ENCODE measurements at regions of chr15 and their contacts with region 1.

Region 1: DNA sequence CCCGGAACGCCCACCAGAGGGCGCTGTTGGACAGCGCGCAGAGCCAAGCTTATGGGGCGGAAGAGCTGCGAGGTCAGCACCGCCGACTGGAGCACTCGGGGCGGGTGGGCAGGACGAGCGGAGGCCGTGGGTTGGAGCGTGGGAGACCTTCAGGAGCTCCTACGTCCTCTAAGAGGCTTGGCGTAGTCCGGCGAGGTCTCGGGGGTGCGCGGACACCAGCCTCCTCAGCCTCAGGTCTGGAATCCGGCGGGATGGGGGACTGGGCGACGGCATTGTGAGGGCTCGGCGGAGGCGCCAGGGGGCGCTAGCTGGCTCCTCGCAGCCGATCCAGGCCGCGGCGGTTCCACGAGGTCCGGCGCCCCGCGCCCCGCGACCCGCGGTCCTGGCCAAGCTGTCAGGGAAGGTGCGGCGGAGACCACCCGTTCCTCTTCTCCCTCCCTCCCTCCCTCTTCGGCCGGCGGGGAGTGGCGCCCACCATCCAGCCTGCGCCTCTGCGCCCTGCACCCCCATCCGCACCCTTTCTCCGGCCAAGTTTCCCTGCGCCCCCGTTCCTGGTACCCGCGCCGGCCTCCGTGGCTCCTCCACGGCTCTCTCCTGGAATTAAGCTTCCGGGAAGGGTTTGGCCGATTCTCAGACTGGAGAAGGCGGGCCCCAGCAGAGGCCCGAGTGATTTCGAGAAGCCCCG is 24.3 kb upstream of the POLG start:
- DNase-seq: peak; percentile 72
- H3K4me3 Mint-ChIP-seq: peak overlapping the region; percentile 78
- H3K27ac Mint-ChIP-seq: no peak overlapping the region
- H3K4me1 Mint-ChIP-seq: no peaks in the 10 kb centered on the region
- H3K27me3 Mint-ChIP-seq: peaks cover 88% of the 10 kb centered on the region
- CTCF ChIP-seq: peak; percentile 92

Region 2: GRCh38 chr15:89177633-89178306 is 181.1 kb before region 1 on chr15:
- CTCF ChIA-PET with region 1: no interaction called
- POLR2A ChIA-PET with region 1: no interaction called
- intact Hi-C with region 1: no loop called
- DNase-seq: peak; percentile 74
- H3K4me3 Mint-ChIP-seq: no peak overlapping the region
- H3K27ac Mint-ChIP-seq: no peak overlapping the region
- H3K4me1 Mint-ChIP-seq: peaks cover 7% of the 10 kb centered on the region
- H3K27me3 Mint-ChIP-seq: no peaks in the 10 kb centered on the region
- CTCF ChIP-seq: peak; percentile 66

Region 3: DNA sequence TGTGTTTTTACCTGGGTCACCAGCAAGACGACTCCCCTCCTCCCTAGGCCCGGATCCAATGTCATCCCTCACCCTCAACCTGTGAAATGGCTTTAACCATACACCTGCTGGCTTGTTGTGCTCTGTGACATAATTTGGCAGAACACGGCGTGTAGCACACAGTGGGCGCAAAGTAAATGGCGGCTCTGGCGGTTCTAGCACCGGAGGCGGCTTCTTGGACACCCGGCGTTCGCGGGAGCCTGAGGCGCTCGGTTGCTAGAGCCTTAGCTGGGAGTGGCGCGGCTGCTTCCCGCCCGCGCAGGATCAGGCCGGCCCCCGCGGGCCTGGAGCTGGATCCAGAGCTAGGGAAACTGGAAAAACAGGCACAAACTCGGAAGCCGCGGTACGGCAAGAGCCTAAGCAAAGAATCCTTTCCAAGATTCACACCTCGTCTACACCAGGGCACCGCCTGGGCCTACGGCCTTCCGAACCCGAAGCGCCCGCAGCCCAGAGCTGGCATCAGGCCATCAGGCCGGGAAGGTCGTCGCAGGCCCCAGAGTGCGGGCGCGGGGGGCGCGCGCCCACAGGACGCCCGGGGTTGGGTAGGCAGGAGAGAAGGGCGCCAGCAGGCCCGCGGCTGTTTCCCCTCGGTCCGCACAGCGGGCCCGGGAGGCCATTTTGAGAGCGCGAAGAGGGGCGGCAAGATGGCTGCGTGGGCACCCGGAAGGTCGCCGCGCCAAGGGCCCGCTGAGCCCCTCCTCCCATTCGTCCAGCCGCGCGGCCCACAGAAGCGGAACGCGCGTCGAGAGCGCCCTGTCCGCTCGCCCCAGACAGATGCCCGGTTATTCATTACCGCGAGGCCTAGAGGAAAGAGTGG is 19.6 kb after region 1 on chr15:
- CTCF ChIA-PET with region 1: interaction called, 40 read pairs
- POLR2A ChIA-PET with region 1: no interaction called
- intact Hi-C with region 1: no loop called
- DNase-seq: no peak
- H3K4me3 Mint-ChIP-seq: no peak overlapping the region
- H3K27ac Mint-ChIP-seq: no peak overlapping the region
- H3K4me1 Mint-ChIP-seq: no peaks in the 10 kb centered on the region
- H3K27me3 Mint-ChIP-seq: peaks cover 79% of the 10 kb centered on the region
- CTCF ChIP-seq: no peak

Region 4: DNA sequence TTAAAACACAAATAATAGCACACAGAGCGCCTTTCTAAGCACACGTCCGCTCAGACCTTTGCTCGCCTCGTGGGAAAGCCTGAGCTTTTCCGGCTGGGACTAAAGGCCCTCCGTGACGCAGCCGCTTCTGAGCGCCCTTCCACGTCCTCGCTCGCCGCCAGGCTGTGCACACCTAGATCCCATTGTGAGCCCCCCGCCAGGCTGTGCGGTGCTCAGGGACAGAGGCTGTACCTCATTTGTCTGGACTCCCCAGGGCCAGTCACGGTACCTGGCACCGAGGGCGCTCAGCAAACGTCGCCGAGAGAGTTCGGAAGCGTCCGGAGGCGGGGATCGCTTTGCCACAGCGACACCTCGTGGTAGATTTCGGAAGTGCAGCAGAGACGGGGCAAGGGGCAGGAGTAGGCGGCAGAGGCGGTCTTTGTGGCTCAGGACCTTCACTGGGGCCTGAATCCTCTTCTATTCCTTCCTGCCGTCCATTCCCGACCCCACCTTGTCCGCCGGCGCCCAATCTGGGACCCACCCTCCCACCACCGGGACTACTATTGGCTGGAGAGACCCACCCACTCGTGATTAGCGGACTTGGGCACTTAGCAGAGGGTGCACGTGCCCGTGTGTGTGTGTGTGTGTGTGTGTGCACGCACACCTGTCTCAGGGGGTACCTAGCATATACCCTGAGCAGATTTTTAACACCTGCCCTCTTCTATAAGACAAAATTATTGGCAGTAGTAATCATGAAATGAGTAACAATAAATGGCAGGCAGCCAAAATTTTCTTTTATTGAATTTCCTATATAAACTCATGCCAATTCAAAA is 71.8 kb after region 1 on chr15:
- CTCF ChIA-PET with region 1: interaction called, 443 read pairs
- POLR2A ChIA-PET with region 1: interaction called, 8 read pairs
- intact Hi-C with region 1: loop called (anchors 1 kb)
- DNase-seq: peak; percentile 59
- H3K4me3 Mint-ChIP-seq: peak overlapping the region; percentile 51
- H3K27ac Mint-ChIP-seq: no peak overlapping the region
- H3K4me1 Mint-ChIP-seq: peaks cover 4% of the 10 kb centered on the region
- H3K27me3 Mint-ChIP-seq: no peaks in the 10 kb centered on the region
- CTCF ChIP-seq: peak; percentile 98

Region 5: DNA sequence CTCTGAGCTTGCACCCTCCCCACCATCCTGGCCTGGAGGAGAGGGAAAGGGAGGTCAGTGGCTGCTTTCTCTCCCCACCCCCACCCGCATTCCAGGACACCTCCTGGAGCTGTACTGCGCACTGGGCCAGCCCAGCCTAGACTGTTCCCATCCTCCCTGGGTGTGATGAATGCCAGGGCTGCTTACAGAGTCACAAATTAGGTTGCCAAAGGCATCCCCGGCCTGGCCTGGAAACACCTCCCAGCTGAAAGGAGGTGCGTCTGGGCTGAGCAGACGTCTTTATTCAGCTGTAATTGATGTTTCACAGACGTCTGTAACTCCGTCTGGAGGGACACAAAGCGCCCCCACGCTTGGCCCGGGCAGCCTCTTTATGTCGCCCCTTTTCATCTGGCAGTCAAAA is 89.9 kb after region 1 on chr15:
- CTCF ChIA-PET with region 1: interaction called, 35 read pairs
- POLR2A ChIA-PET with region 1: no interaction called
- intact Hi-C with region 1: no loop called
- DNase-seq: no peak
- H3K4me3 Mint-ChIP-seq: no peak overlapping the region
- H3K27ac Mint-ChIP-seq: no peak overlapping the region
- H3K4me1 Mint-ChIP-seq: no peaks in the 10 kb centered on the region
- H3K27me3 Mint-ChIP-seq: peaks cover 16% of the 10 kb centered on the region
- CTCF ChIP-seq: no peak

Region 6: GRCh38 chr15:89485855-89486361 is 127.0 kb after region 1 on chr15:
- CTCF ChIA-PET with region 1: interaction called, 16 read pairs
- POLR2A ChIA-PET with region 1: no interaction called
- intact Hi-C with region 1: no loop called
- DNase-seq: no peak
- H3K4me3 Mint-ChIP-seq: no peak overlapping the region
- H3K27ac Mint-ChIP-seq: no peak overlapping the region
- H3K4me1 Mint-ChIP-seq: peaks cover 9% of the 10 kb centered on the region
- H3K27me3 Mint-ChIP-seq: peaks cover 11% of the 10 kb centered on the region
- CTCF ChIP-seq: no peak

Region 7: GRCh38 chr15:89654847-89655805 is 296.2 kb after region 1 on chr15 and contains the start of gene KIF7:
- CTCF ChIA-PET with region 1: no interaction called
- POLR2A ChIA-PET with region 1: no interaction called
- intact Hi-C with region 1: no loop called
- DNase-seq: no peak
- H3K4me3 Mint-ChIP-seq: peak within 1 kb of the TSS; percentile 62
- H3K27ac Mint-ChIP-seq: no peak within 1 kb of the TSS
- H3K4me1 Mint-ChIP-seq: no peaks in the 10 kb centered on the region
- H3K27me3 Mint-ChIP-seq: peaks cover 21% of the 10 kb centered on the region
- CTCF ChIP-seq: no peak
- total RNA-seq, gene KIF7: 2.7 and 3.1 TPM in 2 replicates